HepG2 (cell line): ENCODE measurements at regions of chr20 and their contacts with region 1.

Region 1: GRCh38 chr20:8043687-8044282 is 24.2 kb upstream of the TMX4 start:
- DNase-seq: peak; percentile 81
- ATAC-seq: peak; percentile 88
- H3K4me3 ChIP-seq: no peak overlapping the region
- H3K27ac ChIP-seq: no peak overlapping the region
- H3K4me1 ChIP-seq: peaks cover 26% of the 10 kb centered on the region; the same call in 1 of the 2 replicates
- H3K27me3 ChIP-seq: 0 out of 5 replicates have a peak, but pooled peaks cover 0 to 4% of the 10 kb centered on the region in 2 experiments
- CTCF ChIP-seq: peak; percentile 86
- EP300 ChIP-seq: no peak
- POLR2A ChIP-seq: no peak
- RAD21 ChIP-seq: peak; percentile 70

Region 2: DNA sequence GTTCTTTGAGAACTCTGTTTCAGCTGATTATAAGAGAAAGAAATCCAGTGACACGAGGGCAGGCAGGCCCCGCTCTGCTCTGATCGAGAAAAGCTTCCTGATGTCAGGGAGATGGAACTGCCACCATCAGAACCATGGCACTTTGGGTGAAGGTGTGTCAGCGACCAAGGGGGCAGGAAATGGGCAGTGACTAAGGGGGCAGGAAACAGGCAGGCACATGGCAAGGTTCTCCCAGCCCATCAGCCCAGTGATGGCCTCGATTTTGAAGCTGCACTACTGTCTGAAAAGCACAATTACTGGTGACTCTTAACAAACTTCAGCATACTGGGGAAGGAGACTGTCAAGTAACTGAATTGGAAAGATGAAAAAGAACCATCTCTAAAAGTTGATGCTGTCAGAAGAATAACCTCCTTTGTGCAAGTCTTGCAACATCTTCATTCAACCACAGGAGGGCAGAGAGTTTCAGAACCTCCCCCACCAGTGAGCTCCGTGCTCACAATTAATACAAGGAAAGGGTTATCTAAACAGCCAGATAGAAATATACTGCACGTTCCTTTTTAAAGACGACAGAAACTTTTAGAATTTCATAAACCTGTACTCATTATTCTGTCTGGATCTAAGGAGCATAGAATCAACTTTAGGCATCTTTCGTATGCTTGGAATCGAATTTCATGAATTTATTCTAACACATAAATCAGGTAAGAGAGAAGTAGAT is 63.3 kb before region 1 on chr20:
- CTCF ChIA-PET with region 1: no interaction called
- POLR2A ChIA-PET with region 1: no interaction called
- in situ Hi-C with region 1: no loop called
- intact Hi-C with region 1: loop called (anchors 2 kb)
- DNase-seq: peak; percentile 79
- ATAC-seq: peak; percentile 88
- H3K4me3 ChIP-seq: peak overlapping the region in 1 of 3 experiments; percentile 0; a peak in 1 of 6 replicates
- H3K27ac ChIP-seq: no peak overlapping the region
- H3K4me1 ChIP-seq: peaks cover 22% of the 10 kb centered on the region
- H3K27me3 ChIP-seq: no peaks in the 10 kb centered on the region
- CTCF ChIP-seq: peak; percentile 76
- EP300 ChIP-seq: no peak
- POLR2A ChIP-seq: no peak
- RAD21 ChIP-seq: peak; percentile 50

Region 3: GRCh38 chr20:8007490-8007889 is 36.3 kb before region 1 on chr20:
- CTCF ChIA-PET with region 1: no interaction called
- POLR2A ChIA-PET with region 1: no interaction called
- in situ Hi-C with region 1: no loop called
- intact Hi-C with region 1: no loop called
- DNase-seq: no peak
- ATAC-seq: no peak
- H3K4me3 ChIP-seq: no peak overlapping the region
- H3K27ac ChIP-seq: no peak overlapping the region
- H3K4me1 ChIP-seq: peaks cover under 1% of the 10 kb centered on the region; the same call in 1 of the 2 replicates
- H3K27me3 ChIP-seq: no peaks in the 10 kb centered on the region
- CTCF ChIP-seq: no peak
- EP300 ChIP-seq: no peak
- POLR2A ChIP-seq: no peak
- RAD21 ChIP-seq: no peak

Region 4: GRCh38 chr20:8057871-8058270 is 14.1 kb after region 1 on chr20:
- CTCF ChIA-PET with region 1: no interaction called
- POLR2A ChIA-PET with region 1: no interaction called
- in situ Hi-C with region 1: no loop called
- intact Hi-C with region 1: no loop called
- DNase-seq: no peak
- ATAC-seq: no peak
- H3K4me3 ChIP-seq: no peak overlapping the region
- H3K27ac ChIP-seq: no peak overlapping the region
- H3K4me1 ChIP-seq: peaks cover 7% of the 10 kb centered on the region; the same call in 1 of the 2 replicates
- H3K27me3 ChIP-seq: no peaks in the 10 kb centered on the region
- CTCF ChIP-seq: no peak
- EP300 ChIP-seq: no peak
- POLR2A ChIP-seq: no peak
- RAD21 ChIP-seq: no peak

Region 5: GRCh38 chr20:8082025-8082424 is 38.2 kb after region 1 on chr20:
- CTCF ChIA-PET with region 1: no interaction called
- POLR2A ChIA-PET with region 1: no interaction called
- in situ Hi-C with region 1: no loop called
- intact Hi-C with region 1: no loop called
- DNase-seq: peak; percentile 15
- ATAC-seq: peak; percentile 78
- H3K4me3 ChIP-seq: no peak overlapping the region
- H3K27ac ChIP-seq: no peak overlapping the region
- H3K4me1 ChIP-seq: no peaks in the 10 kb centered on the region
- H3K27me3 ChIP-seq: no peaks in the 10 kb centered on the region
- CTCF ChIP-seq: no peak
- EP300 ChIP-seq: no peak
- POLR2A ChIP-seq: no peak
- RAD21 ChIP-seq: no peak

Region 6: GRCh38 chr20:8175741-8176675 is 132.2 kb after region 1 on chr20:
- CTCF ChIA-PET with region 1: no interaction called
- POLR2A ChIA-PET with region 1: no interaction called
- in situ Hi-C with region 1: no loop called
- intact Hi-C with region 1: no loop called
- DNase-seq: no peak
- ATAC-seq: no peak
- H3K4me3 ChIP-seq: no peak overlapping the region
- H3K27ac ChIP-seq: no peak overlapping the region
- H3K4me1 ChIP-seq: peaks cover 9% of the 10 kb centered on the region; the same call in 1 of the 2 replicates
- H3K27me3 ChIP-seq: no peaks in the 10 kb centered on the region
- CTCF ChIP-seq: no peak
- EP300 ChIP-seq: no peak
- POLR2A ChIP-seq: no peak
- RAD21 ChIP-seq: no peak

Region 7: DNA sequence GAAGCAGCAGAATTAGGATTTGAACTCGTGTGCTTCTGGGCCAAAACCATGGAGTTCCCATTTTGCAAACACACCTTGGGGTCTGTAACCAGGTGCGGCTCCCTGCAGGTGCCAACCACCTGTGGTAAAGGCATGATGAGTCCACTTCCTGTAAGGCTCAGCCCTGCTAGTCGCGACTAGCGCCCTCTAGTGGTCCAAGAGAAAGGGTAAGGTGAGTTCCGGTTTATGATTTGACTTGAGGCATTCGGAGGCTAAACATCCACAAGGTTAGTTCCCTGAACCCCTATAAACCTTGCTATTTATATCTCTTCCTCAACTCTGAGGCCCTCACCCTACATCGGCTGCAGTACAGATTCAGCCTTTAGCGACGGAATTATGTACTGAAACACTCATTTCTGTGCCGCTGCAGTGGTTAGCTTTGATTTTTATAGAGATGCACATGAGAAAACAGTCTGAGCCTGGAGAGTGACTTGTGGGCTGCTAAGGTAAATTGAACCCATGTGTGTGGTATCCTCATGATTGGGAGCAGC is 261.7 kb after region 1 on chr20:
- CTCF ChIA-PET with region 1: interaction called, 4 read pairs
- POLR2A ChIA-PET with region 1: no interaction called
- in situ Hi-C with region 1: loop called (anchors 10 kb)
- intact Hi-C with region 1: no loop called
- DNase-seq: peak; percentile 83
- ATAC-seq: peak; percentile 97
- H3K4me3 ChIP-seq: no peak overlapping the region
- H3K27ac ChIP-seq: no peak overlapping the region
- H3K4me1 ChIP-seq: no peaks in the 10 kb centered on the region
- H3K27me3 ChIP-seq: no peaks in the 10 kb centered on the region
- CTCF ChIP-seq: peak; percentile 87
- EP300 ChIP-seq: no peak
- POLR2A ChIP-seq: no peak
- RAD21 ChIP-seq: peak; percentile 87

Region 8: GRCh38 chr20:8535403-8536261 is 491.8 kb after region 1 on chr20:
- CTCF ChIA-PET with region 1: interaction called, 13 read pairs
- POLR2A ChIA-PET with region 1: no interaction called
- in situ Hi-C with region 1: loop called (anchors 5 kb)
- intact Hi-C with region 1: loop called (anchors 1 kb)
- DNase-seq: peak; percentile 23
- ATAC-seq: peak; percentile 87
- H3K4me3 ChIP-seq: no peak overlapping the region
- H3K27ac ChIP-seq: no peak overlapping the region
- H3K4me1 ChIP-seq: no peaks in the 10 kb centered on the region
- H3K27me3 ChIP-seq: no peaks in the 10 kb centered on the region
- CTCF ChIP-seq: peak; percentile 57
- EP300 ChIP-seq: no peak
- POLR2A ChIP-seq: no peak
- RAD21 ChIP-seq: no peak